ENCODE measurements at regions of chr19 and their contacts with region 1.

Region 1: GRCh38 chr19:43575156-43575950 is at the starts of genes PINLYP and XRCC1:
- DNase-seq: peak; percentile 97 to 98
- H3K4me3 ChIP-seq: peak within 1 kb of the TSS; percentile 79 to 95
- H3K27ac ChIP-seq: peak within 1 kb of the TSS; percentile 85 to 89
- H3K4me1 ChIP-seq: peaks cover 0 to 5% of the 10 kb centered on the region in 2 donors
- H3K27me3 ChIP-seq: no peaks in the 10 kb centered on the region
- CTCF ChIP-seq: no peak
- POLR2A ChIP-seq: peak; percentile 55 to 67
- total RNA-seq, gene PINLYP: 4.6 to 46.5 (median 10.3) TPM
- total RNA-seq, gene XRCC1: 22.7 to 53.2 (median 30.7) TPM

Region 2: DNA sequence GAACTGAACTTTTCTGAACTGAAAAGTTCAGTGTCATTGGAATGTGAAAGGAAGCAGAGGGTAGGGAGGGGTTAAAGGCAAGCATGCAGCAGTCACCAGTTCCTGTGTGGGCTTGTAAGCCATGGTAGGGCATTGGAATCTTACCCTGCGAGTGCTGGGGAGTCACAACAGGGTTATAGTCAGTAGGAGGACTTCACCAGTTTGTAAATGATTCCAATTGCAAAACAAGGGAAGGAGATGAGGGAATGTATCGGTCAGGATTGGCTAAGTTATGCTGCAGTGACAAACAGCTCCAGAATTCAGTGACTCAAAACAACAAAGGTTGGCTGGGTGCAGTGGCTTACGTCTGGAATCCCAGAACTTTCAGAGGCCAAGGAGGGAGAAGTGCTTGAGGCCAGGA is 122.8 kb before region 1 on chr19:
- intact Hi-C with region 1: no loop called
- DNase-seq: no peak
- H3K4me3 ChIP-seq: no peak overlapping the region
- H3K27ac ChIP-seq: no peak overlapping the region
- H3K4me1 ChIP-seq: no peaks in the 10 kb centered on the region
- H3K27me3 ChIP-seq: no peaks in the 10 kb centered on the region
- CTCF ChIP-seq: no peak
- POLR2A ChIP-seq: no peak

Region 3: DNA sequence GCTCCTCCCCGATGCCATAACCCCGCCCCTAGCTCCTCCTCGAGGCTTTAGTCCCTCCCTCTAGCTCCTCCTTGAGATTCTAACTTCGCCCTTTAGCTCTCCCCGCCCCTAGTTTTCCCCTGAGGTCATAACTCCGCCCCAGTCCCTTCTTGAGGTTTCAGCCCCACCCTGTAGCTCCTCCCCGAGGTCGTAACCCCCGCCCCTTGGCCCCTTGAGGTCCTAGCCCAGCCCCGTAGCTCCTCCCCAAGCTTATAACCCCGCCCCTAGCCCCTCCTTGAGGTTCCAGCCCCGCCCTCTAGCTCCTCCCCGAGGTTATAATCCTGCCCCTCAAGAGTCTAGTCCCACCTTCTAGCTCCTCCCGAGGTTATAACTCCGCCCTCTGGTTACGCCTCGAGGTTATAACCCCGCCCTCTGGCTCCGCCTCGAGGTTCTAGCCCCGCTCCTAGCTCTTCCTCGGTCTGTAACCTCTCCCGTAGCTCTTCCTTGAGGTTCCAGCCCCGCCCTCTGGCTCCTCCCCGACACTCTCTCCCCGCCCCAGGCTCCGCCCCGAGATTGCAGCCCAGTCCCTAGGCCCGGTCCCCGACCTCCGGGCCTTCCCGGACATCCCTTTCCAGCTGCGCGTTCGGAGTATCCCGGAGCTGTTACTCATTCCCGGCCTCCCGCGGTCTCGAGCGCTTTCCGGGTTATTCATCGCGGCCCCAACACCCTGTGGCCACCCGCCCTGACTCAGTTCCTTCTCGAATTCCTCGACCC is 93.2 kb after region 1 on chr19:
- intact Hi-C with region 1: loop called (anchors 5 kb)
- DNase-seq: peak; percentile 99 to 100
- H3K4me3 ChIP-seq: peak overlapping the region; percentile 57 to 65
- H3K27ac ChIP-seq: peak overlapping the region; percentile 89 to 95
- H3K4me1 ChIP-seq: peaks cover 0 to 7% of the 10 kb centered on the region in 2 donors
- H3K27me3 ChIP-seq: no peaks in the 10 kb centered on the region
- CTCF ChIP-seq: no peak
- POLR2A ChIP-seq: peak; percentile 86 to 89

Measured in uterus (tissue), 4 donors.